CD4-positive, alpha-beta memory T cell (primary cell): ENCODE measurements at regions of chr15 and their contacts with region 1.

Region 1: GRCh38 chr15:64809649-64810496 is 15.6 kb downstream of the PIF1 start:
- DNase-seq: peak; percentile 42 to 58 (median 54)
- H3K4me3 ChIP-seq: no peak overlapping the region
- H3K4me3 Mint-ChIP-seq: no peak overlapping the region
- H3K27ac ChIP-seq: no peak overlapping the region
- H3K27ac Mint-ChIP-seq: peak overlapping the region in 3 of 7 donors; percentile 18 to 68 (median 43)
- H3K4me1 ChIP-seq: peaks cover 5% of the 10 kb centered on the region
- H3K4me1 Mint-ChIP-seq: peaks cover 0 to 5% (median 2%) of the 10 kb centered on the region in 4 donors
- H3K27me3 ChIP-seq: no peaks in the 10 kb centered on the region
- H3K27me3 Mint-ChIP-seq: no peaks in the 10 kb centered on the region

Region 2: GRCh38 chr15:64836023-64836536 is 26.2 kb after region 1 on chr15:
- CTCF ChIA-PET with region 1: interaction called, 24 read pairs
- POLR2A ChIA-PET with region 1: no interaction called
- intact Hi-C with region 1: no loop called
- DNase-seq: no peak
- H3K4me3 ChIP-seq: peak overlapping the region in 1 of 2 donors; percentile 23
- H3K4me3 Mint-ChIP-seq: peak overlapping the region; percentile 49 to 79 (median 65)
- H3K27ac ChIP-seq: no peak overlapping the region
- H3K27ac Mint-ChIP-seq: peak overlapping the region; percentile 40 to 88 (median 80)
- H3K4me1 ChIP-seq: peaks cover 60% of the 10 kb centered on the region
- H3K4me1 Mint-ChIP-seq: peaks cover 37 to 54% (median 44%) of the 10 kb centered on the region in 4 donors
- H3K27me3 ChIP-seq: no peaks in the 10 kb centered on the region
- H3K27me3 Mint-ChIP-seq: no peaks in the 10 kb centered on the region